Psoas muscle (tissue), 8 donors: ENCODE measurements at regions of chrX and their contacts with region 1.

Region 1: GRCh38 chrX:46758906-46759644 is at the start of gene SLC9A7:
- DNase-seq: peak; percentile 72 to 88
- ATAC-seq: peak; percentile 90 to 94 (median 92)
- H3K4me3 ChIP-seq: peak within 1 kb of the TSS; percentile 67
- H3K27ac ChIP-seq: peak within 1 kb of the TSS; percentile 55
- H3K4me1 ChIP-seq: no peaks in the 10 kb centered on the region
- H3K27me3 ChIP-seq: peaks cover 0 to 14% (median 0%) of the 10 kb centered on the region in 3 donors
- CTCF ChIP-seq: peak; percentile 80
- total RNA-seq, gene SLC9A7: 8.2 to 14.0 (median 11.1) TPM

Region 2: GRCh38 chrX:46796574-46797191 is 37.6 kb after region 1 on chrX:
- intact Hi-C with region 1: loop called (anchors 2 to 5 kb)
- DNase-seq: peak; percentile 73 to 79
- ATAC-seq: peak; percentile 66 to 75 (median 72)
- H3K4me3 ChIP-seq: no peak overlapping the region
- H3K27ac ChIP-seq: no peak overlapping the region
- H3K4me1 ChIP-seq: no peaks in the 10 kb centered on the region
- H3K27me3 ChIP-seq: no peaks in the 10 kb centered on the region
- CTCF ChIP-seq: peak; percentile 75

Region 3: GRCh38 chrX:47093248-47093647 is 334.2 kb after region 1 on chrX:
- intact Hi-C with region 1: loop called in 1 of 2 experiments (anchors 5 kb)
- DNase-seq: no peak
- ATAC-seq: peak in 1 of 4 donors; percentile 58
- H3K4me3 ChIP-seq: no peak overlapping the region
- H3K27ac ChIP-seq: no peak overlapping the region
- H3K4me1 ChIP-seq: no peaks in the 10 kb centered on the region
- H3K27me3 ChIP-seq: peaks cover 0 to 2% (median 0%) of the 10 kb centered on the region in 3 donors
- CTCF ChIP-seq: peak; percentile 43